ENCODE measurements at regions of chrX and their contacts with region 1.

Region 1: GRCh38 chrX:19855700-19856381 is 31.6 kb downstream of the SH3KBP1 start:
- DNase-seq: no peak
- ATAC-seq: no peak
- H3K4me3 ChIP-seq: peak overlapping the region; percentile 13
- H3K4me3 Mint-ChIP-seq: peak overlapping the region in 9 of 10 donors; percentile 44 to 78 (median 74)
- H3K27ac ChIP-seq: peak overlapping the region; percentile 31
- H3K27ac Mint-ChIP-seq: peak overlapping the region; percentile 53 to 95 (median 85)
- H3K4me1 ChIP-seq: peaks cover 11 to 17% of the 10 kb centered on the region in 2 donors
- H3K4me1 Mint-ChIP-seq: peaks cover 24 to 45% (median 37%) of the 10 kb centered on the region in 7 donors
- H3K27me3 ChIP-seq: no peaks in the 10 kb centered on the region
- H3K27me3 Mint-ChIP-seq: no peaks in the 10 kb centered on the region

Region 2: DNA sequence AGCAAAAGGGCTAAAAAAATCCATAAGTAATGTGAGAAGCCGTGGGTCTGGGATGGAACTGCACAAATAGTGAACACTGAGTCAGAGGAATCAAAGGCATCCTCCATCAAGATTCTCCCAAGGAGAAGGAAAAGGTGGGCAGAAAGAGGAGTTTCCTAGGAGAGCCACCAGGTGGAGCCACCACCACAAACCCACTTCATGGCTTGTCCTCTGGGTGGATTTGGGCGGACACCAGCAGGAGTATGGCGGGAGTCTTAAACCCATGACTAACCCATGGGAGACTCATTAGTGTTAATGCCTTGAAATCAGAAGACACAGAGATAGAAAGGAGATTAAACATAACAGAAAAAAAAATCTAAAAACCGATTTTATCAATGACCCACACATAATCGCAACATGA is 116.2 kb before region 1 on chrX:
- CTCF ChIA-PET with region 1: interaction called, 3 read pairs
- POLR2A ChIA-PET with region 1: no interaction called
- intact Hi-C with region 1: loop called in 1 of 2 experiments (anchors 1 kb)
- DNase-seq: peak in 4 of 9 donors; percentile 12 to 33 (median 27)
- ATAC-seq: peak; percentile 72
- H3K4me3 ChIP-seq: no peak overlapping the region
- H3K4me3 Mint-ChIP-seq: peak overlapping the region in 7 of 10 donors; percentile 4 to 75 (median 43)
- H3K27ac ChIP-seq: peak overlapping the region; percentile 0
- H3K27ac Mint-ChIP-seq: peak overlapping the region; percentile 34 to 90 (median 82)
- H3K4me1 ChIP-seq: peaks cover 49 to 52% of the 10 kb centered on the region in 2 donors
- H3K4me1 Mint-ChIP-seq: peaks cover 36 to 87% (median 73%) of the 10 kb centered on the region in 7 donors
- H3K27me3 ChIP-seq: no peaks in the 10 kb centered on the region
- H3K27me3 Mint-ChIP-seq: no peaks in the 10 kb centered on the region

Region 3: GRCh38 chrX:19981947-19982346 is 126.1 kb after region 1 on chrX:
- CTCF ChIA-PET with region 1: no interaction called
- POLR2A ChIA-PET with region 1: no interaction called
- intact Hi-C with region 1: no loop called
- DNase-seq: no peak
- ATAC-seq: no peak
- H3K4me3 ChIP-seq: no peak overlapping the region
- H3K4me3 Mint-ChIP-seq: no peak overlapping the region
- H3K27ac ChIP-seq: no peak overlapping the region
- H3K27ac Mint-ChIP-seq: no peak overlapping the region
- H3K4me1 ChIP-seq: no peaks in the 10 kb centered on the region
- H3K4me1 Mint-ChIP-seq: peaks cover 0 to 34% (median 24%) of the 10 kb centered on the region in 7 donors
- H3K27me3 ChIP-seq: no peaks in the 10 kb centered on the region
- H3K27me3 Mint-ChIP-seq: no peaks in the 10 kb centered on the region

Region 4: GRCh38 chrX:20266810-20267606 is 411.2 kb after region 1 on chrX and contains the start of gene RPS6KA3:
- CTCF ChIA-PET with region 1: no interaction called
- POLR2A ChIA-PET with region 1: no interaction called
- intact Hi-C with region 1: no loop called
- DNase-seq: peak; percentile 83 to 91 (median 88)
- ATAC-seq: peak; percentile 93
- H3K4me3 ChIP-seq: peak within 1 kb of the TSS; percentile 84
- H3K4me3 Mint-ChIP-seq: peak within 1 kb of the TSS; percentile 89 to 98 (median 95)
- H3K27ac ChIP-seq: peak within 1 kb of the TSS; percentile 77
- H3K27ac Mint-ChIP-seq: peak within 1 kb of the TSS; percentile 89 to 95 (median 91)
- H3K4me1 ChIP-seq: peaks cover 0 to 5% of the 10 kb centered on the region in 2 donors
- H3K4me1 Mint-ChIP-seq: peaks cover 0 to 27% (median 20%) of the 10 kb centered on the region in 7 donors
- H3K27me3 ChIP-seq: no peaks in the 10 kb centered on the region
- H3K27me3 Mint-ChIP-seq: peaks cover 0 to 21% (median 0%) of the 10 kb centered on the region in 5 donors
- total RNA-seq, gene RPS6KA3: 59.9 to 77.9 (median 72.6) TPM

Region 5: GRCh38 chrX:20382518-20383297 is 526.9 kb after region 1 on chrX:
- CTCF ChIA-PET with region 1: no interaction called
- POLR2A ChIA-PET with region 1: no interaction called
- intact Hi-C with region 1: no loop called
- DNase-seq: no peak
- ATAC-seq: no peak
- H3K4me3 ChIP-seq: no peak overlapping the region
- H3K4me3 Mint-ChIP-seq: peak overlapping the region in 8 of 10 donors; percentile 19 to 74 (median 45)
- H3K27ac ChIP-seq: no peak overlapping the region
- H3K27ac Mint-ChIP-seq: peak overlapping the region in 2 of 9 donors; percentile 6 to 42
- H3K4me1 ChIP-seq: peaks cover 0 to 3% of the 10 kb centered on the region in 2 donors
- H3K4me1 Mint-ChIP-seq: peaks cover 5 to 18% (median 10%) of the 10 kb centered on the region in 7 donors
- H3K27me3 ChIP-seq: no peaks in the 10 kb centered on the region
- H3K27me3 Mint-ChIP-seq: no peaks in the 10 kb centered on the region

Measured in naive thymus-derived CD4-positive, alpha-beta T cell (primary cell).